Caco-2 (cell line): ENCODE measurements at regions of chr1 and their contacts with region 1.

Region 1: DNA sequence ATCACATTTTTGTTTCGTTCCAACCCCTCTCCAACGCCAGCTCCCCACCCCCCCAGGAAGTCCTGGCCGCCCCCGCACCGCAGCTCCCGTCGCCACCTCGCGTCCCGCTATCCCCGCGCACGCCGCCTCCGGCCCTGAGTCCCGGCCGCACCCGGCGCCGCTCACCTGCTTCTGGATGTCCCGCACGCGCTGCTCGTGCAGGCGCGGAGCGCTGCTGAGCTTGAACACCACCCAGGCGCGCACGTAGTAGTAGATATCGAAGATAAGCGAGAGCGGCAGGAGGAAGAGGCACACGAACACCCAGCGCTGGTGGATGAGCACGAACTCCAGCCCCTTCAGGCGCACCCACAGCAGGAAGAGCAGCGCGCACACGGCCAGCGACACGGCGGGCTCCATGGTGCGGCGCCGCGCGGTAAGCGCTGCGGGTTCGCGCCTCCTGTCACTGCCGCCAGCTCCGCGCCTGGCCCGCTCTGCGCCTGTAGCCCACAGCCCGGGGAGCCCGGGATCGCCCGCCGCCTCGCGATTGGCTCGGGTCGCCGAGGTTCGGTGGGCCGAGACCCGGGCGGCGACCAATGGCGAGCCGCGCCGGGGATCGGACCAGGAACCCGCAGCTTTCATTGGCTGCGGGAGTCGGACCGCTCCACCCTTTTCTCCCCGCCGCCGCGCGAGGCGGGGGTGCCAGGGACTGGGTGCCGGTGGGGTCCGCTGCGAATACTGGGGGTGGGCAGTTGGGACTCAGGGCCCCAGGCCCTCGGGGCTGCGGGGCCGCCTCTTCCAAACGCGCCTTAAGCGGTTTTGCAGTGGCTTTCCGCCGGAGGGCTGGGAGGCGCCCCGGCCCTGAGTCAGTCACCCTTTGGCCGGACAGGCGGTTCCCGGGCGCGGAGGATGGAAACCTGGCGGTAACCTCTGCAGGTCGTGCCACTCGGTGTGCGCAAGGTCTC is at the start of gene DHCR24:
- DNase-seq: peak; percentile 84 to 89
- H3K4me3 ChIP-seq: peak within 1 kb of the TSS; percentile 98
- H3K4me3 Mint-ChIP-seq: peak within 1 kb of the TSS; percentile 100
- H3K27ac Mint-ChIP-seq: peak within 1 kb of the TSS; percentile 89
- H3K4me1 ChIP-seq: peaks cover 42% of the 10 kb centered on the region
- H3K4me1 Mint-ChIP-seq: peaks cover 41% of the 10 kb centered on the region
- H3K27me3 ChIP-seq: no peaks in the 10 kb centered on the region
- H3K27me3 Mint-ChIP-seq: no peaks in the 10 kb centered on the region
- CTCF ChIP-seq: no peak
- total RNA-seq, gene DHCR24: 433 and 522 TPM in 2 replicates

Region 2: DNA sequence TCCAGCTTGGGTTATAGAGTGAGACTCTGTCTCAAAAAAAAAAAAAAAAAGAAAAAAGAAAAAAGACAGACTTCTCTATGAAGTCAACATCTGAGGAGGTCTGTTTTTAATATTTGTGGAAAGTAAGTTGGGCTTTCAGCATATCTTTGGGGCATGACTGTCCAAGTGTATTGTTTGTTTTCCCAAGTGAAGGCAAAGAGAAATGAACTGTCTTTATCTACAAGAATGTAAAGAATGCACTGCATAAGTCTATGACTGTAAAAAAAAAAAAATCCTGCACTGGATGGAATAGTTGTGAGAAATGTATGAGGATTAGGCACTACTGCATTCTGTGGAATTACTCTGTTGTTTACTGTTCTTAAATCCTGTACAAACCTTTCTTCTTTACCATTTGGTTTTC is 47.9 kb after region 1 on chr1:
- CTCF ChIA-PET with region 1: interaction called, 3 read pairs
- POLR2A ChIA-PET with region 1: interaction called, 4 read pairs
- intact Hi-C with region 1: loop called (anchors 1 kb)
- DNase-seq: peak in 1 of 2 experiments; percentile 42
- H3K4me3 ChIP-seq: no peak overlapping the region
- H3K4me3 Mint-ChIP-seq: peak overlapping the region; percentile 16
- H3K27ac Mint-ChIP-seq: peak overlapping the region; percentile 43
- H3K4me1 ChIP-seq: peaks cover 37% of the 10 kb centered on the region
- H3K4me1 Mint-ChIP-seq: peaks cover 24% of the 10 kb centered on the region
- H3K27me3 ChIP-seq: no peaks in the 10 kb centered on the region
- H3K27me3 Mint-ChIP-seq: no peaks in the 10 kb centered on the region
- CTCF ChIP-seq: no peak

Region 3: GRCh38 chr1:54944610-54945544 is 57.9 kb after region 1 on chr1:
- CTCF ChIA-PET with region 1: interaction called, 17 read pairs
- POLR2A ChIA-PET with region 1: interaction called, 7 read pairs
- intact Hi-C with region 1: loop called (anchors 1 kb)
- DNase-seq: peak; percentile 60 to 61
- H3K4me3 ChIP-seq: no peak overlapping the region
- H3K4me3 Mint-ChIP-seq: no peak overlapping the region
- H3K27ac Mint-ChIP-seq: no peak overlapping the region
- H3K4me1 ChIP-seq: peaks cover 7% of the 10 kb centered on the region; the same call in 1 of the 2 replicates
- H3K4me1 Mint-ChIP-seq: peaks cover 1% of the 10 kb centered on the region
- H3K27me3 ChIP-seq: no peaks in the 10 kb centered on the region
- H3K27me3 Mint-ChIP-seq: no peaks in the 10 kb centered on the region
- CTCF ChIP-seq: peak; percentile 51 to 53